ENCODE measurements at regions of chr2 and their contacts with region 1.

Region 1: GRCh38 chr2:109613922-109614714 is at the starts of genes SEPTIN10 and SOWAHC:
- DNase-seq: peak; percentile 86
- H3K4me3 Mint-ChIP-seq: peak within 1 kb of the TSS; percentile 89
- H3K27ac Mint-ChIP-seq: no peak within 1 kb of the TSS
- H3K4me1 Mint-ChIP-seq: peaks cover 20% of the 10 kb centered on the region
- H3K27me3 Mint-ChIP-seq: peaks cover 64% of the 10 kb centered on the region
- total RNA-seq, gene SEPTIN10: 2.3 to 2.7 TPM
- total RNA-seq, gene SOWAHC: 0.38 to 0.44 TPM

Region 2: GRCh38 chr2:108786354-108787199 is 827.5 kb before region 1 on chr2 and contains the start of gene CCDC138:
- CTCF ChIA-PET with region 1: no interaction called
- intact Hi-C with region 1: loop called (anchors 5 kb)
- DNase-seq: peak; percentile 92
- H3K4me3 Mint-ChIP-seq: peak within 1 kb of the TSS; percentile 97
- H3K27ac Mint-ChIP-seq: peak within 1 kb of the TSS; percentile 87
- H3K4me1 Mint-ChIP-seq: peaks cover 14% of the 10 kb centered on the region
- H3K27me3 Mint-ChIP-seq: no peaks in the 10 kb centered on the region
- total RNA-seq, gene CCDC138: 7.4 to 9.5 TPM

Region 3: GRCh38 chr2:109486711-109487535 is 127.2 kb before region 1 on chr2:
- CTCF ChIA-PET with region 1: no interaction called
- intact Hi-C with region 1: no loop called
- DNase-seq: no peak
- H3K4me3 Mint-ChIP-seq: no peak overlapping the region
- H3K27ac Mint-ChIP-seq: no peak overlapping the region
- H3K4me1 Mint-ChIP-seq: no peaks in the 10 kb centered on the region
- H3K27me3 Mint-ChIP-seq: no peaks in the 10 kb centered on the region

Region 4: DNA sequence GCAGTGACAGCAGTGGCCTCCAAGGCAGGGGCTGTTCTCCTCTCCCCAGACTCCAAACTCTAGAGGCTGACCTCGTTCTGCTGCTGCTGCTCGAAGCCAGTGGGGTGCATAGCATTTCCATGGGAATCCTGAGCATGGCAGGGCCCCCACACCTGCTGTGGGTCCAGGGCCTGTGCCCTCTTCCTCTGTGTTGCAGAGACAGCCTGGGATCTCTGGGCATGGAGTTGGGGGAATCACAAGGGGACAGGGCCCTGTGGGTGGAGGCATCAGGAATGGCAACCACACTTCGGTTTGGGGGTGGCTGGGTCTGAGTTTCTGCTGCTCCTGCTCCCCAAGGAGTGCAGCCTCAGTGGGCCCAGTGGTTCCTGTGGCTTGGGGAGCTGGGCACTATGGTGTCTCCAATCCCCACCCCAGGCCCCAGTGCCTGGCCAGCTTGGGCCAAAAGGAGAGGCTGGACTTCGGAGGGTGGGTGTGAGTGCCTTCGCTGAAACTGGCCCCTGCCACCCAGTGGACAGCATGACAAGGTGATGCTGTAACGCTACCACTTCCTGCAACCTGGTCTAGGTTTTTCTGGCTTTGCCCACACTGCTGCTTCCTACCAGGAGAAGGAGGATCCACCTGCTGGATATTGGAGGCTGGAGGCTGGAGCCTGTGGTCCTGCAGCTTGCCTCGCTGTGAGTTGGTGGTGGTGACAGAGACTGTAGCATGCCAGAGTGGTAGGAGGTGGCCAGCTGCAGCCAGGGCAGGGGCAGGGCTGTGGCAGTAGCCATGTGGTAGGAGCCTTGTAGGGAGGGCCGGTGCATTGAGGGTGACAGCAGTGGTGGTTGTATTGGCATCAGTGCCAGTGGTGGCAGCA is 56.7 kb after region 1 on chr2:
- CTCF ChIA-PET with region 1: no interaction called
- intact Hi-C with region 1: no loop called
- DNase-seq: no peak
- H3K4me3 Mint-ChIP-seq: no peak overlapping the region
- H3K27ac Mint-ChIP-seq: no peak overlapping the region
- H3K4me1 Mint-ChIP-seq: no peaks in the 10 kb centered on the region
- H3K27me3 Mint-ChIP-seq: peaks cover 4% of the 10 kb centered on the region

Region 5: DNA sequence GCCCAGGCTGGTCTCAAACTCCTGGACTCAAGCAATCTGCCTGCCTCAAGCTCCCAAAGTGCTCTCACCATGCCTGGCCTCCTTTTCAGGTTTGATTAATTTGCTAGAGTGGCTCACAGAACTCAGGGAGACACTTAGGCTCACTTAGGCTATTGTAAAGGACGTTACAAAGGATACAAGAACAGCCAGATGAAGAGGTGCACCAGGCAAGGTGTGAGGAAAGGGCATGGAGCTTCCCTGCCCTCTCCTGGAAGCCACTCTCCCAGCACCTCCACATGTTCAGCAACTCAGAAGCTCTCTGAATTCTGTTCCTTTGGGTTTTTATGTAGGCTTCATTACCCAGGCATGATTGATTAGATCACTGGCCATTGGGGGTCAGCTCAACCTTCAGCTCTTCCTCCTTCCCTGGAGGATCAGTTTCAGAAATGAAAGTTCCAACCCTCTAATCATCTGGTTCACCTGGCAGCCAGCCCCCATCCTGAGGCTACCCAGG is 101.2 kb after region 1 on chr2:
- CTCF ChIA-PET with region 1: interaction called, 4 read pairs
- intact Hi-C with region 1: loop called (anchors 5 kb)
- DNase-seq: peak; percentile 14
- H3K4me3 Mint-ChIP-seq: no peak overlapping the region
- H3K27ac Mint-ChIP-seq: no peak overlapping the region
- H3K4me1 Mint-ChIP-seq: no peaks in the 10 kb centered on the region
- H3K27me3 Mint-ChIP-seq: no peaks in the 10 kb centered on the region

Region 6: GRCh38 chr2:109736177-109736827 is 122.2 kb after region 1 on chr2:
- CTCF ChIA-PET with region 1: no interaction called
- intact Hi-C with region 1: loop called (anchors 5 kb)
- DNase-seq: peak; percentile 50
- H3K4me3 Mint-ChIP-seq: no peak overlapping the region
- H3K27ac Mint-ChIP-seq: no peak overlapping the region
- H3K4me1 Mint-ChIP-seq: no peaks in the 10 kb centered on the region
- H3K27me3 Mint-ChIP-seq: peaks cover 7% of the 10 kb centered on the region

Measured in activated naive CD4-positive, alpha-beta T cell treated with anti-CD3 and anti-CD28 coated beads for 36 hours (primary cell).